Activated CD4-positive, alpha-beta T cell treated with anti-CD3 and anti-CD28 coated beads for 36 hours (primary cell): ENCODE measurements at regions of chr19 and their contacts with region 1.

Region 1: GRCh38 chr19:52237771-52238400 is 31.5 kb upstream of the ZNF766 start:
- DNase-seq: peak; percentile 73
- ATAC-seq: peak; percentile 65
- H3K4me3 Mint-ChIP-seq: no peak overlapping the region
- H3K27ac Mint-ChIP-seq: no peak overlapping the region
- H3K4me1 Mint-ChIP-seq: no peaks in the 10 kb centered on the region
- H3K27me3 Mint-ChIP-seq: no peaks in the 10 kb centered on the region

Region 2: GRCh38 chr19:51777570-51778462 is 460.1 kb before region 1 on chr19:
- CTCF ChIA-PET with region 1: no interaction called
- POLR2A ChIA-PET with region 1: no interaction called
- intact Hi-C with region 1: loop called in 1 of 2 experiments (anchors 10 kb)
- DNase-seq: peak; percentile 66
- ATAC-seq: peak; percentile 74
- H3K4me3 Mint-ChIP-seq: no peak overlapping the region
- H3K27ac Mint-ChIP-seq: no peak overlapping the region
- H3K4me1 Mint-ChIP-seq: peaks cover 6% of the 10 kb centered on the region
- H3K27me3 Mint-ChIP-seq: peaks cover 57% of the 10 kb centered on the region

Region 3: DNA sequence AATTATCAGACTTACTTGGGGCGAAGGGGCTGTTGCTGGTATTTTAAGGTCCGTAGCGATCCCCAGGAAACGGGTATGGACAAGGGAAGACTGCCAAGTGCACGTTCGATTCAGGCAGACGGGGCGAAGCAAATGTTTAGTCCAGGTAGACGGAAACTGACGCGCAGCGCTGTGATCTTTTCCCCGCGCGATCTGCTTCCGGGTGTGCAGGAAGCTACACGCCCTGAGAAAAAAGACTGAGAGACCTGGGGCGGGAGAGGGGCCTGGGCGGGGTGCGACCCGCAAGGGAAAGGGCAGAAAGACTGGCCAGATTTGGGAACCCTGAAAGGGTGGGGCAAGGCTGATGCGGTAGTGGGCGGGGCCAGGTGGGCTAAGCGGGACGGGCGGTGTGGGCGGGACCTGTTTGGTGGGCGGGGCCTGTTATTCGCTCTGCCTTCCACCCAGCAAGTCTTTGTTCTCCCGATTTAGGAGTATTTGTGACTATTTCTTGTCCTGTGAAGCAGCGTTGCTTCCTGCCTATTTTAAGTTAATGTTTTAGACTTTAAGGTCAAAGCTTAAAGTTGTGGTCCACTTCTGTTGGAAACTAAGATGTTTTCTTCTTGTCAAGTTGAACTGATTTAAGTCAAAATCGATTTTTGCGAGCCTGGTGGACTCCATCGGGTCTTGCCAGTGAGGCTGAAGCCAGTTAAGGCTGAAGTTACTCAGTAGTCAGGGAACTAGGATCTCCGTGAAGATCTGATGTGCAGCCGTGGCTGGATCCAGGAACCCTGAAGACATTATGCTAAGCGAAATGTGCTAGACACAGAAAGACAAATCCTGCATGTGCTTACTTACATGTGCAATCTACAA is 66.3 kb before region 1 on chr19 and contains the start of gene ZNF836:
- CTCF ChIA-PET with region 1: interaction called, 5 read pairs
- POLR2A ChIA-PET with region 1: no interaction called
- intact Hi-C with region 1: loop called in 1 of 2 experiments (anchors 1 kb)
- DNase-seq: peak; percentile 96
- ATAC-seq: peak; percentile 96
- H3K4me3 Mint-ChIP-seq: peak within 1 kb of the TSS; percentile 87
- H3K27ac Mint-ChIP-seq: peak within 1 kb of the TSS; percentile 93
- H3K4me1 Mint-ChIP-seq: peaks cover 17% of the 10 kb centered on the region
- H3K27me3 Mint-ChIP-seq: no peaks in the 10 kb centered on the region
- total RNA-seq, gene ZNF836: 10.1 to 11.5 TPM

Region 4: GRCh38 chr19:52227196-52227940 is 10.5 kb before region 1 on chr19:
- CTCF ChIA-PET with region 1: interaction called, 11 read pairs
- POLR2A ChIA-PET with region 1: interaction called, 3 read pairs
- intact Hi-C with region 1: no loop called
- DNase-seq: no peak
- ATAC-seq: peak; percentile 16
- H3K4me3 Mint-ChIP-seq: no peak overlapping the region
- H3K27ac Mint-ChIP-seq: peak overlapping the region; percentile 94
- H3K4me1 Mint-ChIP-seq: peaks cover 32% of the 10 kb centered on the region
- H3K27me3 Mint-ChIP-seq: no peaks in the 10 kb centered on the region

Region 5: GRCh38 chr19:52248241-52248640 is 10.4 kb after region 1 on chr19:
- CTCF ChIA-PET with region 1: interaction called, 13 read pairs
- POLR2A ChIA-PET with region 1: no interaction called
- intact Hi-C with region 1: no loop called
- DNase-seq: peak; percentile 82
- ATAC-seq: peak; percentile 93
- H3K4me3 Mint-ChIP-seq: no peak overlapping the region
- H3K27ac Mint-ChIP-seq: no peak overlapping the region
- H3K4me1 Mint-ChIP-seq: no peaks in the 10 kb centered on the region
- H3K27me3 Mint-ChIP-seq: no peaks in the 10 kb centered on the region